Heart right ventricle (tissue), 16 donors: ENCODE measurements at regions of chr12 and their contacts with region 1.

Region 1: DNA sequence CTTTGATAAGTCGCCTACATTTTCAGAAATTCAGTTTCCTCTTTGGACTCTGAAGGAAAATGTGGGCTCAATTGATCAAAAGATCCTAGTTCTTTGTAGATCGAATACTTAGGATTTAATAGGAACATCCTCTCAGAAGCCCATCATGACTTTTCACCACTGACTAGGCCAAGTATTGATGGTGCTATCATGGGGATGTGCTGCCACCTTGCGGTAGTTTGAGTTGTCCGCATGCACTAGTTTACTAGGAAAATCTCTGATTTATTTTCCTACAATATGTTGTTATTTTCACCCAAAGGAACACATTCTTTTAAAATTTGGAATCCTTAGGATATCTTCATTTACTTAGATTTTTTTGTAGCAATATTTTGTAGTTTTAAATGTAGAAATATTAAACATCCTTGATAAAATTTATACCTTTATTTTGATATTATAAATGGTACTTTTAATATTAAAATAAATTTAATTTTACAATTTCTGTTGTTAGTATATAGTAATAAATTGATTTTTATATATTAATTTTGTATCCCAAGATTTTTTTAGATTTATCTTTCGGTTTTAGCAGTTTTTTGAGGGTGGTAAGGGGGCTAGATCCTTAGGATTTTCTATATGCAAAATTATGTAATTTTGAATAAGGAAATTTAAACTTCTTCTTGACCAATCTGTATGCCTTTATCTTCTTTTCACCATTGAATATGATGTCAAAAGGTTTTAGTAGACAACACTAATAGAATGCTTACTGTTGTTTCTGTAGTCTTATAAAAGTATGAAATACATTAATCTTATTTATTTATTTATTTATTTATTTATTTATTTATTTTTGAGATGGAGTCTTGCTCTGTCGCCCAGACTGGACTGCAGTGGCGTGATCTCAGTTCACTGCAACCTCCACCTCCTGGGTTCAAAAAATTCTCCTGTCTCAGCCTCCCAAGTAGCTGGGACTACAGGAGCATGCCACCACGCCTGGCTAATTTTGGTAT is 52.9 kb upstream of the OR9K2 start:
- DNase-seq: peak; percentile 49 to 75
- ATAC-seq: peak in 6 of 8 donors; percentile 51 to 70 (median 61)
- H3K4me3 ChIP-seq: no peak overlapping the region
- H3K27ac ChIP-seq: no peak overlapping the region
- H3K4me1 ChIP-seq: no peaks in the 10 kb centered on the region
- H3K27me3 ChIP-seq: peaks cover 0 to 30% (median 13%) of the 10 kb centered on the region in 7 donors
- CTCF ChIP-seq: peak; percentile 71 to 92 (median 88)

Region 2: DNA sequence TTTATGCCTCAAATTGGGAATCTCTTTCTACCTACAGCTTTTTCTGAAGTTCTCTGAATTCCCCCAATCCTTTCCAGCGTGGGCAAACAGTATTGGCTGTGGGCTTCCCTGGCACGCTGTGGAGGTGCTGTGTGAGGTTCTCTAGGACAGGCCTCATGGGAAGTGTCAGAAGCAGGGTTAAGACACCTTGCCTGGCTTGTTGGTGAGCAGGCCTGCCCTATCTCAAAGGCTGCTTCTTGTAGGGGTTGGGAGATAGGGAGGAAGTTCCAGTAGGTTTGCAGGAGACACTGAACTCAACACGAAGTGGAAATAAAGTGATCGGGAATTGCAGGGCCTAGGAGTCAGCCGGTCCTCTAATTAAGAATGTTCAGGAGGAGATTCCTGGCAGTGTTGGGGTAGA is 395.2 kb before region 1 on chr12:
- intact Hi-C with region 1: no loop called
- DNase-seq: no peak
- ATAC-seq: no peak
- H3K4me3 ChIP-seq: no peak overlapping the region
- H3K27ac ChIP-seq: no peak overlapping the region
- H3K4me1 ChIP-seq: no peaks in the 10 kb centered on the region
- H3K27me3 ChIP-seq: peaks cover 0 to 51% (median 32%) of the 10 kb centered on the region in 7 donors
- CTCF ChIP-seq: no peak

Region 3: DNA sequence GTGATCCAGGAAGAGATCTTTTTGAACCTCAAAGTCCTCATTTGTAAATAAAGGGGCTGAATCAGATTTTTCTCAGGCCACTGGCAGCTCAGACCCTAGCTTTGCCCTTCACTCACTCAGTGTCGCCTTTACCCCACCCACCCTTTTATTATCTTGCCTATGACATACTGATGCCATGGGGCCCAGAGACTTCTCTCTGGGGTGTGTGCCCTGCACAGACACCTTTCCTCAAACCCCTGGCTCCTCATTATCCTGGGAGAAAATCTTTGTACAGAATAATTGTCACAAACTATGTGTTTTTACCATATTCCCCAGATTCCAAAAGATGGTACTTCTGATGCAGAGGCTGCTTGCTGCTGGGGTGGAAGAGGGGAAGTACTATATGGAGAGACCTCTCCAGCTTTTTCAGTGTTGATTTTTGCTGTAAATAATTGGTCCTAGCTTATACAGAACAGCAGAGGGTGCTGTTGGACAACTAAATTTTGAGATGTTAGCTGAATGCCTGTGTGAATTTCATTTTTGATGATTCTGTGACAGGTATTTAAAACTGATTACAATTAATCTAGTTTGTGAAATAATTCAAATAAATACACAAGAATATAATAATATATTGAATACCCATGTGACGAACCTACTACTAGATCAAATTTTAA is 371.3 kb before region 1 on chr12:
- intact Hi-C with region 1: loop called in 4 of 10 experiments (anchors 5 to 10 kb)
- DNase-seq: no peak
- ATAC-seq: no peak
- H3K4me3 ChIP-seq: no peak overlapping the region
- H3K27ac ChIP-seq: no peak overlapping the region
- H3K4me1 ChIP-seq: no peaks in the 10 kb centered on the region
- H3K27me3 ChIP-seq: peaks cover 0 to 16% (median 4%) of the 10 kb centered on the region in 7 donors
- CTCF ChIP-seq: peak; percentile 25 to 75 (median 65)

Region 4: DNA sequence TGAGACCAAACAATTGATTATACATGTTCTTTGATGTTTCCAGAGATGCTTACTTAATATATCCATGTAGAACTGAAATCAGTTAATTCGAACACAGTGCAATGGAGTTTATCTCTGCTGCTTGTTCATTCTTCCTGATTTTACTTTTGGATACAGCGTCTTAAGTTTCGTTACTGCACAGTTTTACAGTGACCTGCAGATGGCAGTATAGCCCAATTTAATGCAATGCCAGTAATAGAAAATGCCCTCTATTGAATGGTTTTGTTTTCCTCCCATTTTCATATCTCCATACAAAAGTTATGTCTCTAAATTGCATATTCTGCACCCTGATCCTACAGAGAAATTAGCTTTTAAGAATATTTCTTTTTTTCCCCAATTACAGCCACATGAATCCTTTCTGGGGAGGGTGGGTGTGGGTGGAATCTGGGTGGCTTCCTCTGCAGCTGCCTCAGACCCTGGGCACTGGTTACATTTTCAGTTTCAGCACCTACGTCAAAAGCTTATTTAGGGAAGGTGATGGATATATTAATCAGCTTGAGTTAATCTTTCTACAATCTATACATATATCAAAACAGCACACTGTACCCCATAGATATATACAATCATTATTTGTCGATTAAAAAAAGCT is 324.0 kb before region 1 on chr12:
- intact Hi-C with region 1: loop called in 3 of 10 experiments (anchors 5 to 10 kb)
- DNase-seq: peak in 1 of 2 donors; percentile 25
- ATAC-seq: no peak
- H3K4me3 ChIP-seq: no peak overlapping the region
- H3K27ac ChIP-seq: no peak overlapping the region
- H3K4me1 ChIP-seq: peaks cover 0 to 3% (median 0%) of the 10 kb centered on the region in 9 donors
- H3K27me3 ChIP-seq: peaks cover 0 to 20% (median 10%) of the 10 kb centered on the region in 7 donors
- CTCF ChIP-seq: peak; percentile 35 to 84 (median 76)

Region 5: DNA sequence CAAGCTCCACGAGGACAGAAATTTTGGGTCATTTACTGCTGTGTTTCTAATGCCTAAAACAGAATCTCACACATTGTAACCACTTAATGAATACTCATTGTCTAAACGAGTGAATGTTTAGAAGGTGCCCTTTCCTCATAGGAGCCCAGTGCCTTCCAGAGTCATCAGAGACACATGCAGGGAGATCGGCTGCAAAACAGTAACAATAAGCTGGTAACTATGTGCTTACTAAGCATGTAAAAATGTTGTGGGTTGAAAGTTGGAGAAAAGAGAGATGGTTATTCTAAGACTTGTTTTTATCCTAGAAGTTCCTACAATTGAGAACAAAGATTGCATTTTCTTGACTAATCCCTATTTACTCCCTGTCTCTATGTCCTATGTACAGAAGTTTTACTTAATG is 96.2 kb before region 1 on chr12:
- intact Hi-C with region 1: no loop called
- DNase-seq: no peak
- ATAC-seq: no peak
- H3K4me3 ChIP-seq: no peak overlapping the region
- H3K27ac ChIP-seq: no peak overlapping the region
- H3K4me1 ChIP-seq: peaks cover 0 to 15% (median 0%) of the 10 kb centered on the region in 9 donors
- H3K27me3 ChIP-seq: no peaks in the 10 kb centered on the region
- CTCF ChIP-seq: no peak

Region 6: DNA sequence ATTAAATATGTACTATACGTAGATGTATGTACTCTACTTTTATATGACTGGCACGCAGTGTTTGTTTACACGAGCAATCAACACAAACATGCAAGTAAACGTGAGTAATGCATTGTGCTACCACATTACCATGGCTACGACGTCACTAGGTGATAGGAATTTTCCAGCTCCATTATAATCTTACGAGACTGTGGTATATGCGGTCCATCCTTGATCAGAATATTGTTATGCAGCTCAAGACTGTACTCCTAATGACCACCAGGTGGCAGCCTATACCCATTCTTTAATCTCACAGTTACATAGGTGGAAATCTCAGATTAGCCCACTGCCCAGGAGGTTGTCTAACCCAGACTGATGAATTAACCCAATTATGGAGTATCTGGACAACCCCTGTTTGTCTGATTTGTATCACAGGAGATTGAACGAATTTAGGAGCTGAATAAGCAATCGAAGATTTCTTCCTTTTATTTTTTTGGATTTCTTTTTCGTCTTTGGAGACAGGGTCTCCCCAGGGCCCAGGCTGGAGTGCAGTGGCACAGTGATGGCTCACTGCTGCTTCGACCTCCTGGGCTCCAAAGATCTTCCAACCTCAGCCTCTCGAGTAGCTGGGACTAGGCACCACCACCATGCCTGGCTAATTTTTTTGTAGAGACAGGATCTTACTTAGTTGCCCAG is 80.0 kb before region 1 on chr12:
- intact Hi-C with region 1: loop called (anchors 1 to 5 kb)
- DNase-seq: peak in 1 of 2 donors; percentile 44
- ATAC-seq: peak in 6 of 8 donors; percentile 54 to 78 (median 60)
- H3K4me3 ChIP-seq: no peak overlapping the region
- H3K27ac ChIP-seq: no peak overlapping the region
- H3K4me1 ChIP-seq: peaks cover 0 to 23% (median 6%) of the 10 kb centered on the region in 9 donors
- H3K27me3 ChIP-seq: peaks cover 0 to 21% (median 6%) of the 10 kb centered on the region in 7 donors
- CTCF ChIP-seq: peak; percentile 81 to 92 (median 87)

Region 7: GRCh38 chr12:54998958-54999510 is 74.3 kb before region 1 on chr12:
- intact Hi-C with region 1: loop called in 2 of 10 experiments (anchors 5 kb)
- DNase-seq: no peak
- ATAC-seq: no peak
- H3K4me3 ChIP-seq: no peak overlapping the region
- H3K27ac ChIP-seq: no peak overlapping the region
- H3K4me1 ChIP-seq: no peaks in the 10 kb centered on the region
- H3K27me3 ChIP-seq: peaks cover 0 to 35% (median 9%) of the 10 kb centered on the region in 7 donors
- CTCF ChIP-seq: no peak